Activated CD8-positive, alpha-beta memory T cell treated with anti-CD3 and anti-CD28 coated beads, Interleukin-2, amount 10 ng/mL, durations not matched to agents 7 days and 5 days (primary cell): ENCODE measurements at regions of chr7 and their contacts with region 1.

Region 1: DNA sequence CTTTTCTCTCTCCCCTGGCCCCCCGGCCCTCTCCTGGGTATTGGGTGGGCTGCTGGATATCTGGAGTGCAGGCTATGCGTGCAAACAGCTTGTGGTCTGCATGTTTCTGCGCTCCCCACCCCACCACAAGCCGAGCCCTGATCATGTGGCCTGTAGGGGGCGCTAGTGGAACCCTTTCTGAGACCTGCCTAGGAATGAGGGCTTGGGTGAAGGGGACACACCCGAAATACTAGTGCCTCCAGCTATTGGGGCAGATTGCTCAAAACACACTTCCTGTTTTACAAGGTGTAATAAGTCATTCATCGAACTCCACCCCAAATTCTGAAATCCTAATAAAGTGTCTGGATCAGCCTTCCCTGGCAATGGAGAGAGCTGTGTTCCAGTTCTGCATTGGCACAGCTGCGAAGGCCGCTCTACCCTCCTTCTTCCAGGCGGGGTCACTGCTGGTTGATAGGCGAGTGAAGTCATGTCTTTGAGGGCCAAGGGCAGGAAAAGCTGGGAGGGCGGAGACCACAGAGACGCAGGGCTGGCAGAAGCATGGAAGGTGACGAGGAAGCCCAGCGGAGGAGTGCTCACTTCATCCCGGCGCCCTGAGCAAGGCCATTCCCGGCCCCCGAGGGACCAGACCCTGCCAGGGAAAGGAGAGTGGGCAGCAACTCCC is 19.8 kb upstream of the PRRT4 start:
- DNase-seq: no peak
- ATAC-seq: no peak
- H3K4me3 Mint-ChIP-seq: no peak overlapping the region
- H3K27ac Mint-ChIP-seq: no peak overlapping the region
- H3K4me1 Mint-ChIP-seq: no peaks in the 10 kb centered on the region
- H3K27me3 Mint-ChIP-seq: peaks cover 4% of the 10 kb centered on the region

Region 2: GRCh38 chr7:128356546-128357216 is 24.6 kb before region 1 on chr7:
- CTCF ChIA-PET with region 1: interaction called, 191 read pairs
- DNase-seq: no peak
- ATAC-seq: no peak
- H3K4me3 Mint-ChIP-seq: no peak overlapping the region
- H3K27ac Mint-ChIP-seq: no peak overlapping the region
- H3K4me1 Mint-ChIP-seq: peaks cover 13% of the 10 kb centered on the region
- H3K27me3 Mint-ChIP-seq: peaks cover 48% of the 10 kb centered on the region

Region 3: GRCh38 chr7:128497405-128497804 is 116.1 kb after region 1 on chr7:
- CTCF ChIA-PET with region 1: no interaction called
- DNase-seq: no peak
- ATAC-seq: no peak
- H3K4me3 Mint-ChIP-seq: no peak overlapping the region
- H3K27ac Mint-ChIP-seq: no peak overlapping the region
- H3K4me1 Mint-ChIP-seq: no peaks in the 10 kb centered on the region
- H3K27me3 Mint-ChIP-seq: no peaks in the 10 kb centered on the region